Activated CD4-positive, alpha-beta T cell treated with anti-CD3 and anti-CD28 coated beads, Interleukin-2, amount 10 ng/mL, durations not matched to agents 7 days and 5 days (primary cell): ENCODE measurements at regions of chr5 and their contacts with region 1.

Region 1: GRCh38 chr5:91272858-91273257 is 110.3 kb downstream of the ARRDC3 start:
- DNase-seq: no peak
- H3K4me3 Mint-ChIP-seq: no peak overlapping the region
- H3K27ac Mint-ChIP-seq: no peak overlapping the region
- H3K4me1 Mint-ChIP-seq: peaks cover 26% of the 10 kb centered on the region
- H3K27me3 Mint-ChIP-seq: peaks cover 9% of the 10 kb centered on the region

Region 2: GRCh38 chr5:91176288-91177016 is 96.4 kb before region 1 on chr5:
- CTCF ChIA-PET with region 1: no interaction called
- POLR2A ChIA-PET with region 1: no interaction called
- DNase-seq: no peak
- H3K4me3 Mint-ChIP-seq: no peak overlapping the region
- H3K27ac Mint-ChIP-seq: no peak overlapping the region
- H3K4me1 Mint-ChIP-seq: no peaks in the 10 kb centered on the region
- H3K27me3 Mint-ChIP-seq: peaks cover 2% of the 10 kb centered on the region

Region 3: GRCh38 chr5:91293131-91293530 is 20.3 kb after region 1 on chr5:
- CTCF ChIA-PET with region 1: interaction called, 11 read pairs
- POLR2A ChIA-PET with region 1: interaction called, 3 read pairs
- DNase-seq: peak; percentile 15
- H3K4me3 Mint-ChIP-seq: no peak overlapping the region
- H3K27ac Mint-ChIP-seq: no peak overlapping the region
- H3K4me1 Mint-ChIP-seq: peaks cover 16% of the 10 kb centered on the region
- H3K27me3 Mint-ChIP-seq: no peaks in the 10 kb centered on the region